CD14-positive monocyte (primary cell): ENCODE measurements at regions of chr11 and their contacts with region 1.

Region 1: DNA sequence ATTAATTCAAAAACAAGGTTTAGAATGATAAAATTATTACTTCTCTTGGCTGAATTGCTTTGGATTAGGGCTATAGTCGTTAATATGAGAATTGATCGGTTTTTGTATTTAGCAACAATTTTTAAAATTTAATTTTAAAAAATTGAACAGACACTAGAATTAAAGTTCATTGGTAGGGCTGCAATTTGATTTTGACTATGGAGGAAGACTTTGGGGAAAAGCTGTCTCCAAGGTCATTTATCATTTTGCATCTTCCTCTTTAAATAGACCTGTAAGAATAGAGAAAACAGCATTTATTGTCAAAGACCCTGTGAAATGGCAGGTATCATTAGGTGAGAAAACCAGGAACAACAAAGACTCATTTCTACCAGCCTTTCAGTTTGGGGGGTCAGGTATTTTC is at the start of gene OR4S2:
- DNase-seq: no peak
- H3K4me3 ChIP-seq: no peak within 1 kb of the TSS
- H3K4me3 Mint-ChIP-seq: no peak within 1 kb of the TSS
- H3K27ac ChIP-seq: no peak within 1 kb of the TSS
- H3K27ac Mint-ChIP-seq: no peak within 1 kb of the TSS
- H3K4me1 ChIP-seq: no peaks in the 10 kb centered on the region
- H3K4me1 Mint-ChIP-seq: no peaks in the 10 kb centered on the region
- H3K27me3 ChIP-seq: no peaks in the 10 kb centered on the region
- H3K27me3 Mint-ChIP-seq: no peaks in the 10 kb centered on the region
- CTCF ChIP-seq: no peak
- polyA plus RNA-seq, gene OR4S2: not detected

Region 2: DNA sequence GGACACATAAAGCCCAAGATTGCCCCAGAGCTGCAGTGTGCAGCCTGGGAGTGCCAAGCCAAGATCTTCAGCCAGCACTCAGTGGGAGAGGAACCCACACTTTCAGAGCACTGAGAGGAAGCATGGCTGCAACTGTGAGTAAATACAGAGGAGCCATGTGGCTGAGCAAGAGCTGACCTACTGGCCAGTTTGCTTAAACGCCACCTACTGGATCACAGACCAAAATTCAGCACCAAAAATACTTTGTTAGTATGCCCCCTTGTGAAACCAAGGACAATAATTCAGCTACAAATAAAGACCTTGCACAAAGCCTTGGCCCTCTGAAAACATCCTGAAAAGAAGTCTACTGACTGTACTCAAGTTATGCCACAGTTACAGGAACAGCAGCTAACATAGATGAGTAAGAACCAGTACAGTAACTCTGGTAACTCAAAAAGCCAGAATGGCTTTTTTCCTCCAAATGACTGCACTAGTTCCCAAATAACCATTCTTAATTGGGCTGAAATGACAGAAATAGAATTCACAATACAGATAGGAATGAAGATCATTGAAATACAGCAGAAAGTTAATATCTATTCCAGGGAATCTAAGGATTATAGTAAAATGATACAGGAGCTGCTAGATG is 290.4 kb before region 1 on chr11:
- intact Hi-C with region 1: no loop called
- DNase-seq: no peak
- H3K4me3 ChIP-seq: no peak overlapping the region
- H3K4me3 Mint-ChIP-seq: no peak overlapping the region
- H3K27ac ChIP-seq: no peak overlapping the region
- H3K27ac Mint-ChIP-seq: no peak overlapping the region
- H3K4me1 ChIP-seq: no peaks in the 10 kb centered on the region
- H3K4me1 Mint-ChIP-seq: no peaks in the 10 kb centered on the region
- H3K27me3 ChIP-seq: no peaks in the 10 kb centered on the region
- H3K27me3 Mint-ChIP-seq: no peaks in the 10 kb centered on the region
- CTCF ChIP-seq: no peak

Region 3: GRCh38 chr11:55554169-55554568 is 93.9 kb before region 1 on chr11 and contains the start of gene OR4C15:
- intact Hi-C with region 1: loop called in 1 of 2 experiments (anchors 10 kb)
- DNase-seq: no peak
- H3K4me3 ChIP-seq: no peak within 1 kb of the TSS
- H3K4me3 Mint-ChIP-seq: no peak within 1 kb of the TSS
- H3K27ac ChIP-seq: no peak within 1 kb of the TSS
- H3K27ac Mint-ChIP-seq: no peak within 1 kb of the TSS
- H3K4me1 ChIP-seq: no peaks in the 10 kb centered on the region
- H3K4me1 Mint-ChIP-seq: no peaks in the 10 kb centered on the region
- H3K27me3 ChIP-seq: no peaks in the 10 kb centered on the region
- H3K27me3 Mint-ChIP-seq: peaks cover 0 to 3% (median 0%) of the 10 kb centered on the region in 3 donors
- CTCF ChIP-seq: no peak
- polyA plus RNA-seq, gene OR4C15: not detected

Region 4: DNA sequence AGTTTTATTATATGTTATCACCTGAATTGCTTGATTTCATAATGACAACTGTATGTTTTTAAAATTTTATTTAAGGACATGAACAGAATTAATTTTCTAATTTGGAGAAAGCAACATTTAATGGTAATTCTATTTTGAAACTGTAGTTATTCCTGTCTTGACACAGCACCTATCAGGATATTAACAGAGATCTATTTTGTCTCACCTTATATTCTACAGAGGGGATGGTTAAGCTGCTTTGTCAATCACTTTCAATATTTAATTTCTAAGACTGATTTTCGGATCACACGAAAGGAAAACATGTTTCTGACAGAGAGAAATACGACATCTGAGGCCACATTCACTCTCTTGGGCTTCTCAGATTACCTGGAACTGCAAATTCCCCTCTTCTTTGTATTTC is 190.4 kb after region 1 on chr11 and contains the start of gene OR5D16:
- intact Hi-C with region 1: no loop called
- DNase-seq: no peak
- H3K4me3 ChIP-seq: no peak within 1 kb of the TSS
- H3K4me3 Mint-ChIP-seq: no peak within 1 kb of the TSS
- H3K27ac ChIP-seq: no peak within 1 kb of the TSS
- H3K27ac Mint-ChIP-seq: no peak within 1 kb of the TSS
- H3K4me1 ChIP-seq: no peaks in the 10 kb centered on the region
- H3K4me1 Mint-ChIP-seq: no peaks in the 10 kb centered on the region
- H3K27me3 ChIP-seq: no peaks in the 10 kb centered on the region
- H3K27me3 Mint-ChIP-seq: no peaks in the 10 kb centered on the region
- CTCF ChIP-seq: no peak
- polyA plus RNA-seq, gene OR5D16: not detected